Head of caudate nucleus (tissue), 42 donors: ENCODE measurements at regions of chr7 and their contacts with region 1.

Region 1: DNA sequence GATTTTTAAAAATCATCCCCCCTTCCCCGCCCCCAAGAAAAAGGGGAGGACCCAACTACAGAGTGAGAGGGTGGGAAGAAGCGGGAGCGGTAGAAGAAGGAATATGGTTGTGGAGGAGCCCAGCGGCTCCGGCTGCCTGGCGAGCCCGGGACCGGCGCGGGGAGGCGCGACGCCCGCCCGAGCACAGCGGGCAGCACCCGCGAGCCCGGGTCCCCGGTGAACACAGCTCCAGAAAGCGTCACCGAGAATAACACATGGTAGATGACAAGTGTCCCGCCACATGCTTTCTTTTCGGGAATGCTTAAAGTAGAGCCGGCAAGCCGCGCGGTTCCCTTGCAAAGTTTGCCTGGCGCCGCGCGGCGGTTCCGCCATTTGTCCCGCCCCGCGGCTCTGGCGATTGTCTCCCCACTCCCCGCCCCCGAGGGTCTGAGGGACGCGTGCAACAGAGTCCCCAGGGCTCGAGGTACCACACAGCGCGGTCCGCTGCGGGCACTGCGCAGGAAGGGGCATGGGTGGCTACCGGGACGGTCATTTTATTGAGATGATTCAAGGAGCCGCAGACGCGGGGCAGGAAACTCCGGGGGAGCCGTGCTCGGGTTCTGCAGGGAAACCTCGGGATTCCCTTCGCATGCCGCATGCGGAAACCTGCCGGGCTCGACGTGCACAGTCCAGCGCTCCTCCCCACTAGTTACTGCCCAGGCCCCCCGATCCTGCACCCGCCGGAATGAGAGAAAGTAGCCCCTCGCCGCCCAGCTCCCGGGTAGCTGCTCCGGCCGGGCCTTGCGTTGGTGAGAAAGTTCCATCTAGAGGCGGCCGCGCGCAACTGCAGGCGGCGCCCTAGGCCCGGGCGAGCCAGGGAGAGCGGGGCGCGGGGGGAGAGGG is 781 bp upstream of the GRM8 start:
- DNase-seq: peak; percentile 45 to 91 (median 82)

Region 2: GRCh38 chr7:126803060-126803665 is 450.4 kb before region 1 on chr7:
- intact Hi-C with region 1: loop called (anchors 10 kb)
- DNase-seq: peak in 31 of 42 donors; percentile 7 to 83 (median 52)

Region 3: GRCh38 chr7:127107601-127108007 is 145.9 kb before region 1 on chr7:
- intact Hi-C with region 1: loop called (anchors 5 kb)
- DNase-seq: peak in 38 of 42 donors; percentile 3 to 82 (median 42)

Region 4: GRCh38 chr7:127194571-127194970 is 59.0 kb before region 1 on chr7:
- intact Hi-C with region 1: no loop called
- DNase-seq: no peak

Region 5: DNA sequence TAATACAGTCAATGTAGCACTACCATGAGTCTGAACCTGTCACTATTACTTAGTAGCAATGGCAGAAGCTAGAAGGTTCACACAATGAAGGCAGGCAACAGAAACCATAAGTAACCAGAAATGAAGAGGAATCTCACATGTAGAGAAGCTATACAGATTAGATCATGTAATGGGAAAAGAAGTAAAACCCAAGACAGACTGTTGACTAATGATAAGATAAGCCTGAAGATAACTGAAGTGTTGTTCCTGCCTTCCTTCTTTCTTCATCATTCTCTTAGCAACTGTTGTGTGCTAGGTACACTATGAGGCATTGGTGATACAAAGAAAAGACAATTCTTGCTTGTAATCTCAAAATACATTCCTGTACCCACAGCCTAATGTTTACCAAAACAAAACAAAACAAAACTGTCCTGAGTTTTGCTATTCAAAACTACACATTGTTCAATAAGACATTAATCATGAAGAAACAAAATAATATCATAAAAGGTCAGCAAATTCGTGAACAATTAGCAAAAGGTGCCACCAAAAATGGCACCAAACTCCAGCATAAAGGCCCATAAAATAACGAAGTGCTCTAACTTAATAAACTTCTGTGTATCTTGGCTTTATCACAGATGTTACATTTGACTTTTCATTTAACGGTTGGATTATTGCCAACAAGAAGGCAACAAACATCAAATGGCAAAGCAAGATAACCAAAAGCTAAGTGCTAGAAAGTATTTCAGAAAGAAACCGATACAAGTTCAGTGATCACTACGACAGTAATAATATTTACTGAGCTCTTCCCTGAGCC is 111.8 kb after region 1 on chr7:
- intact Hi-C with region 1: no loop called
- DNase-seq: no peak